B cell (primary cell): ENCODE measurements at regions of chr1 and their contacts with region 1.

Region 1: GRCh38 chr1:165630629-165631341 is at the start of gene MGST3:
- DNase-seq: peak; percentile 95
- ATAC-seq: peak; percentile 94
- H3K4me3 ChIP-seq: peak within 1 kb of the TSS; percentile 74 to 93 (median 84)
- H3K4me3 Mint-ChIP-seq: no peak within 1 kb of the TSS
- H3K27ac ChIP-seq: peak within 1 kb of the TSS; percentile 72 to 83
- H3K27ac Mint-ChIP-seq: peak within 1 kb of the TSS; percentile 67
- H3K4me1 ChIP-seq: peaks cover 27 to 31% of the 10 kb centered on the region in 2 donors
- H3K4me1 Mint-ChIP-seq: peaks cover 31% of the 10 kb centered on the region
- H3K27me3 ChIP-seq: no peaks in the 10 kb centered on the region
- H3K27me3 Mint-ChIP-seq: no peaks in the 10 kb centered on the region
- CTCF ChIP-seq: no peak
- total RNA-seq, gene MGST3: 41.7 and 46.0 TPM in 2 replicates

Region 2: DNA sequence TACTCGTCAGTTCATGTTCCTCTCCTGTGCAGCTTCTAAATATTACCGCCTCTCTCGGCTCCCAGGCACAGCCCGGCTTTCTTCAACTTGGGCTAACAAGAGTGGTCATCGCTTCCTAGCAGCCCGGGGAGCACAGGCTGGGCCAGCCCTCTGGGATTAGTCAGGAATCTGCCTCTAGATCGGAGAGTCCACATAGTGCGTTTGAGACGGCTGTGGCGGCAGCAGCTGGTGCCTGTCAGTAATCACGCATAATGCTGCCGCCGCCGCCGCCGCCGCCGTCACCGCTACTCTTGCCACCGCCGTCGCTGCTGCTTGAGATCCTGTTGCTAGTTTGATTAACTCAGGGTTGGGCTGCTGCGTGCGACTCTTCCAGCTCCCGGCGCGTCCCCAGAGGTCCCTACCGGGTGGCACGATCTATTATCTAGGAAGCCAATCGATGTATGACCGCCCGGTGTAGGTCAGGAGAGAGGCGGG is 185.9 kb before region 1 on chr1 and contains the start of gene RXRG:
- CTCF ChIA-PET with region 1: no interaction called
- POLR2A ChIA-PET with region 1: no interaction called
- intact Hi-C with region 1: no loop called
- DNase-seq: peak; percentile 11
- ATAC-seq: no peak
- H3K4me3 ChIP-seq: peak within 1 kb of the TSS in 1 of 5 experiments; percentile 10
- H3K4me3 Mint-ChIP-seq: no peak within 1 kb of the TSS
- H3K27ac ChIP-seq: no peak within 1 kb of the TSS
- H3K27ac Mint-ChIP-seq: no peak within 1 kb of the TSS
- H3K4me1 ChIP-seq: peaks cover 13 to 16% of the 10 kb centered on the region in 2 donors
- H3K4me1 Mint-ChIP-seq: no peaks in the 10 kb centered on the region
- H3K27me3 ChIP-seq: peaks cover 0 to 54% (median 35%) of the 10 kb centered on the region in 4 experiments
- H3K27me3 Mint-ChIP-seq: peaks cover 51% of the 10 kb centered on the region
- CTCF ChIP-seq: no peak
- total RNA-seq, gene RXRG: not detected in 2 replicates

Region 3: GRCh38 chr1:165697881-165698760 is 67.3 kb after region 1 on chr1 and contains the start of gene ALDH9A1:
- CTCF ChIA-PET with region 1: interaction called, 4 read pairs
- POLR2A ChIA-PET with region 1: interaction called, 3 read pairs
- intact Hi-C with region 1: loop called (anchors 1 kb)
- DNase-seq: peak; percentile 89
- ATAC-seq: peak; percentile 89
- H3K4me3 ChIP-seq: peak within 1 kb of the TSS; percentile 73 to 96 (median 95)
- H3K4me3 Mint-ChIP-seq: peak within 1 kb of the TSS; percentile 92
- H3K27ac ChIP-seq: peak within 1 kb of the TSS; percentile 90 to 92
- H3K27ac Mint-ChIP-seq: peak within 1 kb of the TSS; percentile 91
- H3K4me1 ChIP-seq: peaks cover 15 to 18% of the 10 kb centered on the region in 2 donors
- H3K4me1 Mint-ChIP-seq: peaks cover 25% of the 10 kb centered on the region
- H3K27me3 ChIP-seq: peaks cover 0 to 4% (median 0%) of the 10 kb centered on the region in 4 experiments
- H3K27me3 Mint-ChIP-seq: peaks cover 3% of the 10 kb centered on the region
- CTCF ChIP-seq: peak; percentile 24
- total RNA-seq, gene ALDH9A1: 37.5 and 37.9 TPM in 2 replicates